ENCODE measurements at regions of chr15 and their contacts with region 1.

Region 1: DNA sequence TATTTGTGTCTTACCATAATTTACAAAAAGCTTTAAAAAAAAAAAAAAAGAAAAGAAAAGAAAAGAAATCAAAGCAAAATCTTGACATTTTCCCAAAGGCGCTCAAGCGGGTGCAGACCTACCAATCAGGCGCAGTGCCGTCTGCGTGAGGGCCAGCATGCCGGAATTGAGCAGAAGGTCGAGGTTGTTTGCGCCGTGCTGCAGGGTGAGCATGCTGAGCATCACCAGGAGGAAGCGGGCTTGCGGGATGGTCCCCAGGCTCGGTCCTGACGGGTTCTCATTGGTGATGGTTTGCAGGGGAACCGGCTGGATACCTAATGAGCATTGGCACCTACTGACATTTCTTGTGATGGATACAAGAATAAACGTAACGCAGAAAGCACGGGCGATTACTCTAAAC is 93.9 kb downstream of the HERC2 start:
- DNase-seq: no peak
- ATAC-seq: no peak
- H3K4me3 ChIP-seq: no peak overlapping the region
- H3K27ac ChIP-seq: no peak overlapping the region
- H3K4me1 ChIP-seq: no peaks in the 10 kb centered on the region
- H3K27me3 ChIP-seq: no peaks in the 10 kb centered on the region
- CTCF ChIP-seq: no peak

Region 2: GRCh38 chr15:28094732-28095521 is 133.2 kb before region 1 on chr15:
- CTCF ChIA-PET with region 1: interaction called, 13 read pairs
- POLR2A ChIA-PET with region 1: no interaction called
- in situ Hi-C with region 1: no loop called
- intact Hi-C with region 1: no loop called
- DNase-seq: no peak
- ATAC-seq: peak; percentile 35
- H3K4me3 ChIP-seq: peak overlapping the region; percentile 42 to 72
- H3K27ac ChIP-seq: no peak overlapping the region
- H3K4me1 ChIP-seq: peaks cover 7% of the 10 kb centered on the region; the same call in 1 of the 2 replicates
- H3K27me3 ChIP-seq: 0 out of 2 replicates have a peak, but pooled peaks cover 2% of the 10 kb centered on the region
- CTCF ChIP-seq: no peak